Panc1 (cell line): ENCODE measurements at regions of chr11 and their contacts with region 1.

Region 1: GRCh38 chr11:83222499-83222898 is 29.0 kb downstream of the ANKRD42 start:
- DNase-seq: no peak
- ATAC-seq: no peak
- H3K4me3 ChIP-seq: no peak overlapping the region
- H3K27ac ChIP-seq: no peak overlapping the region
- H3K4me1 ChIP-seq: peaks cover 4% of the 10 kb centered on the region; the same call in 1 of the 2 replicates
- H3K27me3 ChIP-seq: peaks cover 5% of the 10 kb centered on the region; the same call in 1 of the 2 replicates
- CTCF ChIP-seq: no peak

Region 2: GRCh38 chr11:83193315-83194280 is 28.9 kb before region 1 on chr11 and contains the start of gene ANKRD42:
- CTCF ChIA-PET with region 1: no interaction called
- POLR2A ChIA-PET with region 1: interaction called, 11 read pairs
- in situ Hi-C with region 1: no loop called
- intact Hi-C with region 1: no loop called
- DNase-seq: peak; percentile 90
- ATAC-seq: peak; percentile 97
- H3K4me3 ChIP-seq: peak within 1 kb of the TSS; percentile 88
- H3K27ac ChIP-seq: peak within 1 kb of the TSS; percentile 97
- H3K4me1 ChIP-seq: peaks cover 23% of the 10 kb centered on the region
- H3K27me3 ChIP-seq: no peaks in the 10 kb centered on the region
- CTCF ChIP-seq: no peak
- total RNA-seq, gene ANKRD42: 14.8 TPM

Region 3: DNA sequence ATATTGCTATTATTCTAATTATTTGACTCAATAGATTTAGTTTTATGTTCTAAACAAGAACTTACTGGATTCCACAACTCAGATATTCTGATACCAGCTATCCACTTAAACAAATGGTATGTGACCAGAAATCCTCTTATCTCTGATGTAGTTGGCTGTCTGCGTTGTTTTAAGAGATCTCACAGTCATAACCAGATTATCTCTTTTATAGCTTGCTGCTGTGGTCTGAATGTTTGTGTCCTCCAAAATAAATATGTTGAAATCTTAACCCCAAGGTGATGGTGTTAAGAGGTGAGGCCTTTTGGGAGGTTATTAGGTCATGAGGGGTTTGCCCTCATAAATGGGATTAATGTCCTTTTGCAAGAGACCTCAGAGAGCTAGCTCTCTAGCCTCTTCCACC is 16.3 kb before region 1 on chr11:
- CTCF ChIA-PET with region 1: no interaction called
- POLR2A ChIA-PET with region 1: no interaction called
- in situ Hi-C with region 1: no loop called
- intact Hi-C with region 1: no loop called
- DNase-seq: no peak
- ATAC-seq: no peak
- H3K4me3 ChIP-seq: no peak overlapping the region
- H3K27ac ChIP-seq: no peak overlapping the region
- H3K4me1 ChIP-seq: no peaks in the 10 kb centered on the region
- H3K27me3 ChIP-seq: no peaks in the 10 kb centered on the region
- CTCF ChIP-seq: no peak